Activated CD8-positive, alpha-beta T cell treated with anti-CD3 and anti-CD28 coated beads for 36 hours (primary cell): ENCODE measurements at regions of chr3 and their contacts with region 1.

Region 1: DNA sequence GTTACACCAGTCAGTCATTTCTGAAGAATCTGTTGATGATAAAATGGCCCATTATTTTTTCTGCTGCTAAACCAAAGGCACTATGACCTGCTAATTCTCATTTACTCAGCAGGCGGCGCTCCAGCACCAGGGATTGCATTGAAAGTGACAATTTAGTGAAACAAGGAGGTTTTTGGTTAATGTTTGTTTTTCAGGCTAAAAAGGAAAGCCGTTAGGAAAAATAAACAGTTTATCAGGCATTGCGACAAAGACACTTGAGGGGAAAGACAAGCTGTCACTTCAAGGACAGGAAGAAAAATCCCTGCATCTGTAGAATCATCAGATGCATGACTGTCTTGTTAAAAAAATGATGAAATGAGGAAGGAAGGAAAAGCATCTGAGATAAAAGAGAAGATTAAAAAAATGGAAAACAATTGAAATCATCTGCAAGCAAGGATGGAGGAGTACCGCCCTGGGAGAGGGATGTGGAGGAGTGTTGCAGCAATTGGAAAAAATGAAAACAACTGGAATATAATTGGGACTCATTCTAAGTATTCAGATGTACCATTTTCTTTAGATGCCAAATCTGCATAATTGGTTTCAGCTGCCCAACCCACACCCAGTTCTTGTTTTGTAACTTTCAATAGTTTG is 54.0 kb downstream of the NR1D2 start:
- DNase-seq: peak; percentile 85
- ATAC-seq: peak; percentile 37
- H3K4me3 Mint-ChIP-seq: no peak overlapping the region
- H3K27ac Mint-ChIP-seq: no peak overlapping the region
- H3K4me1 Mint-ChIP-seq: peaks cover 7% of the 10 kb centered on the region
- H3K27me3 Mint-ChIP-seq: peaks cover 5% of the 10 kb centered on the region
- CTCF ChIP-seq: peak; percentile 98

Region 2: GRCh38 chr3:23888617-23889228 is 110.4 kb before region 1 on chr3:
- CTCF ChIA-PET with region 1: interaction called, 11 read pairs
- POLR2A ChIA-PET with region 1: no interaction called
- intact Hi-C with region 1: no loop called
- DNase-seq: no peak
- ATAC-seq: no peak
- H3K4me3 Mint-ChIP-seq: no peak overlapping the region
- H3K27ac Mint-ChIP-seq: no peak overlapping the region
- H3K4me1 Mint-ChIP-seq: no peaks in the 10 kb centered on the region
- H3K27me3 Mint-ChIP-seq: no peaks in the 10 kb centered on the region
- CTCF ChIP-seq: peak; percentile 73

Region 3: GRCh38 chr3:24232784-24233183 is 233.7 kb after region 1 on chr3:
- CTCF ChIA-PET with region 1: interaction called, 21 read pairs
- POLR2A ChIA-PET with region 1: no interaction called
- intact Hi-C with region 1: loop called (anchors 2 kb)
- DNase-seq: no peak
- ATAC-seq: no peak
- H3K4me3 Mint-ChIP-seq: no peak overlapping the region
- H3K27ac Mint-ChIP-seq: no peak overlapping the region
- H3K4me1 Mint-ChIP-seq: no peaks in the 10 kb centered on the region
- H3K27me3 Mint-ChIP-seq: no peaks in the 10 kb centered on the region
- CTCF ChIP-seq: no peak

Region 4: GRCh38 chr3:24237971-24238767 is 239.0 kb after region 1 on chr3:
- CTCF ChIA-PET with region 1: interaction called, 21 read pairs
- POLR2A ChIA-PET with region 1: no interaction called
- intact Hi-C with region 1: loop called (anchors 2 kb)
- DNase-seq: peak; percentile 42
- ATAC-seq: peak; percentile 93
- H3K4me3 Mint-ChIP-seq: no peak overlapping the region
- H3K27ac Mint-ChIP-seq: no peak overlapping the region
- H3K4me1 Mint-ChIP-seq: no peaks in the 10 kb centered on the region
- H3K27me3 Mint-ChIP-seq: no peaks in the 10 kb centered on the region
- CTCF ChIP-seq: peak; percentile 47

Region 5: GRCh38 chr3:24680214-24680967 is 681.3 kb after region 1 on chr3:
- CTCF ChIA-PET with region 1: interaction called, 3 read pairs
- POLR2A ChIA-PET with region 1: no interaction called
- intact Hi-C with region 1: loop called (anchors 10 kb)
- DNase-seq: peak; percentile 71
- ATAC-seq: peak; percentile 56
- H3K4me3 Mint-ChIP-seq: no peak overlapping the region
- H3K27ac Mint-ChIP-seq: no peak overlapping the region
- H3K4me1 Mint-ChIP-seq: peaks cover 9% of the 10 kb centered on the region
- H3K27me3 Mint-ChIP-seq: peaks cover 31% of the 10 kb centered on the region
- CTCF ChIP-seq: peak; percentile 81